Spleen (tissue), 13 donors: ENCODE measurements at regions of chr19 and their contacts with region 1.

Region 1: DNA sequence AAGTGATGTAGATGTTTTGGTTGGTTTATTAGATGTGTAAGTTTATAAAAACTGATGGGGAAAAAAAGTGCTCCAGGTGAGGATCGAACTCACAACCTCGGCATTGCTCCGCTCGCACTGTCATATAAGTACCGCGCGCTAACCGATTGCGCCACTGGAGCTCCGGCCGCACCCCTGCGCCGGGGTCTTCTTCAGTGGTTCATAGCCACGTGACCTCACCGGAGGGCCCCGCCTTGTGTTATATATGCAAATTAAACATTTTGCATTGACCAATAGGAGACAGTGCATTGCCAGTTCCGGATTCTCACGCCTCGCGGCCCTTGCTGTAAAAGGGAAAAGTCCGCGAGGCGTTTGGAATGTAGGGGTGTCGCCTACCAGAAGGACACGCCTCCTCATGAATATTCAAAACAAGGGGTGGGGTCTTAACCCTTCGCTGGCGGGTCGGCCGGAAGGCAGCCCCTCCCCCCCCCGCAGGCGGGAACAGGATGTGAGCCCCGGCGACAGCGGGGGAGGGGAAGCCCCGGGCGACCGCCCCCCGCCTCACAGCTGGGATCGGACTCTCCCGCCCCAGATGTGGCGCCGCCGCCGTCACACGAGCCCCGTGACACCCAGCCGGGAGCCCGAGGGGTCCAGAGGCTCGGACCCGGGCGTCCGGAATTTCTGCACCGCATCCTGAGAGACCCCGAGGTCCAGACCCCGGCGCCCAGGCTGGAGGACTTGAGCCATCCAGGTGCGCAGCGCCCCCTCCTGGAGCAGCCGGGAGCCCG is at the start of gene PLEKHG2:
- DNase-seq: peak; percentile 98
- H3K4me3 ChIP-seq: peak within 1 kb of the TSS; percentile 60 to 98 (median 74)
- H3K27ac ChIP-seq: peak within 1 kb of the TSS; percentile 91 to 100 (median 99)
- H3K4me1 ChIP-seq: peaks cover 22 to 84% (median 57%) of the 10 kb centered on the region in 6 donors
- H3K27me3 ChIP-seq: peaks cover 0 to 4% (median 0%) of the 10 kb centered on the region in 7 donors
- CTCF ChIP-seq: peak in 9 of 11 experiments; percentile 0 to 91 (median 84)
- POLR2A ChIP-seq: peak in 2 of 3 donors; percentile 89 to 90
- total RNA-seq, gene PLEKHG2: 18.6 to 107 (median 48.4) TPM

Region 2: GRCh38 chr19:39341719-39342604 is 70.3 kb before region 1 on chr19 and contains the start of gene SAMD4B:
- intact Hi-C with region 1: loop called (anchors 10 kb)
- DNase-seq: peak; percentile 100
- H3K4me3 ChIP-seq: peak within 1 kb of the TSS; percentile 53 to 92 (median 69)
- H3K27ac ChIP-seq: peak within 1 kb of the TSS; percentile 85 to 100 (median 96)
- H3K4me1 ChIP-seq: peaks cover 26 to 87% (median 71%) of the 10 kb centered on the region in 6 donors
- H3K27me3 ChIP-seq: no peaks in the 10 kb centered on the region
- CTCF ChIP-seq: peak; percentile 68 to 100 (median 97)
- POLR2A ChIP-seq: peak; percentile 90 to 98 (median 97)
- total RNA-seq, gene SAMD4B: 66.4 to 108 (median 84.1) TPM